T-cell (primary cell): ENCODE measurements at regions of chr10 and their contacts with region 1.

Region 1: GRCh38 chr10:78155722-78156121 is 122.1 kb downstream of the RPS24 start:
- DNase-seq: no peak
- ATAC-seq: no peak
- H3K4me3 ChIP-seq: no peak overlapping the region
- H3K4me3 Mint-ChIP-seq: no peak overlapping the region
- H3K27ac ChIP-seq: no peak overlapping the region
- H3K27ac Mint-ChIP-seq: no peak overlapping the region
- H3K4me1 ChIP-seq: no peaks in the 10 kb centered on the region
- H3K4me1 Mint-ChIP-seq: no peaks in the 10 kb centered on the region
- H3K27me3 ChIP-seq: no peaks in the 10 kb centered on the region
- H3K27me3 Mint-ChIP-seq: peaks cover 0 to 23% of the 10 kb centered on the region in 2 donors

Region 2: GRCh38 chr10:78236416-78237015 is 80.8 kb after region 1 on chr10:
- CTCF ChIA-PET with region 1: no interaction called
- POLR2A ChIA-PET with region 1: interaction called in 1 of 2 experiments, 14 read pairs
- DNase-seq: no peak
- ATAC-seq: no peak
- H3K4me3 ChIP-seq: no peak overlapping the region
- H3K4me3 Mint-ChIP-seq: no peak overlapping the region
- H3K27ac ChIP-seq: no peak overlapping the region
- H3K27ac Mint-ChIP-seq: no peak overlapping the region
- H3K4me1 ChIP-seq: no peaks in the 10 kb centered on the region
- H3K4me1 Mint-ChIP-seq: no peaks in the 10 kb centered on the region
- H3K27me3 ChIP-seq: peaks cover 0 to 18% of the 10 kb centered on the region in 2 experiments
- H3K27me3 Mint-ChIP-seq: peaks cover 4 to 16% of the 10 kb centered on the region in 2 donors